Esophagus muscularis mucosa (tissue), 4 donors: ENCODE measurements at regions of chr2 and their contacts with region 1.

Region 1: GRCh38 chr2:11124503-11125068 is 30.7 kb upstream of the SLC66A3 start:
- DNase-seq: no peak
- H3K4me3 ChIP-seq: no peak overlapping the region
- H3K27ac ChIP-seq: no peak overlapping the region
- H3K4me1 ChIP-seq: peaks cover 0 to 6% (median 3%) of the 10 kb centered on the region in 4 donors
- H3K27me3 ChIP-seq: peaks cover 0 to 18% (median 0%) of the 10 kb centered on the region in 4 donors
- CTCF ChIP-seq: peak; percentile 59 to 83 (median 72)
- EP300 ChIP-seq: no peak
- POLR2A ChIP-seq: no peak

Region 2: DNA sequence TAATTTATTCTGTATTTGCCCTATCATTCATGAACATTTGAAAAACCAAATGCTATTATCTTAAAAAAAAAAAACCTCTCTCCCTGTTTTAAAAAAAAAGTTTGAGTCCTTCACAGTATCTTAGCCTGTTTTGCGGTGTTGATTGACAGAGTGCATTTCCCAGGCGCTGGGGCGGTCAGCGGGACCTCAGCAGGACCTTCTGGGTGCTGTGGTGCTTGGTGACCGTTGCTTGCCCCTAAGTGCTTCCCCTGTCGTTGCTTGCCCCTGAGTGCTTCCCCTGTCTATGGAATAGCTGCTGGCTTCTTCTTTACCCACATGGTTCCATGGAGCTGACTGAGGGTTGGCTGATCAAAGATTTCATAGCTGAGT is 391.0 kb before region 1 on chr2:
- intact Hi-C with region 1: no loop called
- DNase-seq: no peak
- H3K4me3 ChIP-seq: no peak overlapping the region
- H3K27ac ChIP-seq: no peak overlapping the region
- H3K4me1 ChIP-seq: no peaks in the 10 kb centered on the region
- H3K27me3 ChIP-seq: peaks cover 0 to 5% (median 0%) of the 10 kb centered on the region in 4 donors
- CTCF ChIP-seq: no peak
- EP300 ChIP-seq: no peak
- POLR2A ChIP-seq: no peak

Region 3: DNA sequence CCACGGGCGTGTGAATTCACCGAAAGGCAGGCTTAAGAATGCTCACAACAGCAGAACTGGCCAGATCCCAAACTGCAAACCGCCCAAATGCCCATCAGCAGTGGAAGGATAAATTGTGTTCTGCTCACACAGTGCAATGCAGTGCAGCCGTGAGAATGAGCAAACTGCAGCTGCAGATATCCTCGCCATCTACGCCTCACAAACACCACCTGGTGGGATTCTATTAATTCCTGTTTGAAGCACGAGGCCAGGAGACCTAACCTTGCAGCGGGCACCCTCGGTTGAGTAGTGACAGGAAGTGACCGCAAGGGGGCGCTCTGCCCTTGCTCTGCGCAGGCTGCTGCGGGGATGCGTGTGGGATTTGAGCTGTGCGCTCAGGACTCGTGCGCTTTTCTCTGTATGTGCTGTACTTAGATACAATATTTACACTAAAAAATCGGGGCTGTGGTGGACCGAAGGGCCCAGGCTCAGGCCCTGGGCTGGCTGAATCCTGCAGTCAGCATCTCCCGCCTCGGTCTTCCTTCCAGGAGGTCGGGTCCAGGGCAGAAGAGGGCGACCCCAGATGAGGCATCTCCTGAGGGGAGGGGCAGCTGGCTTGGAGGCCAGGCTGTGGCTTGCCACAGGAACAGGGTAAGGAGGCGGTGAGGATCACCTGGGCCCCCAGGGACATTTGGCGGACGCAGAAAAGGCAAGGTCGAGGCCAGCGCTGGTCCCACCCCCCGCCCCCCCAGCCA is 292.2 kb before region 1 on chr2:
- intact Hi-C with region 1: loop called (anchors 2 kb)
- DNase-seq: no peak
- H3K4me3 ChIP-seq: no peak overlapping the region
- H3K27ac ChIP-seq: no peak overlapping the region
- H3K4me1 ChIP-seq: peaks cover 7 to 17% (median 15%) of the 10 kb centered on the region in 4 donors
- H3K27me3 ChIP-seq: peaks cover 0 to 68% (median 0%) of the 10 kb centered on the region in 4 donors
- CTCF ChIP-seq: peak; percentile 93 to 99 (median 93)
- EP300 ChIP-seq: no peak
- POLR2A ChIP-seq: no peak

Region 4: DNA sequence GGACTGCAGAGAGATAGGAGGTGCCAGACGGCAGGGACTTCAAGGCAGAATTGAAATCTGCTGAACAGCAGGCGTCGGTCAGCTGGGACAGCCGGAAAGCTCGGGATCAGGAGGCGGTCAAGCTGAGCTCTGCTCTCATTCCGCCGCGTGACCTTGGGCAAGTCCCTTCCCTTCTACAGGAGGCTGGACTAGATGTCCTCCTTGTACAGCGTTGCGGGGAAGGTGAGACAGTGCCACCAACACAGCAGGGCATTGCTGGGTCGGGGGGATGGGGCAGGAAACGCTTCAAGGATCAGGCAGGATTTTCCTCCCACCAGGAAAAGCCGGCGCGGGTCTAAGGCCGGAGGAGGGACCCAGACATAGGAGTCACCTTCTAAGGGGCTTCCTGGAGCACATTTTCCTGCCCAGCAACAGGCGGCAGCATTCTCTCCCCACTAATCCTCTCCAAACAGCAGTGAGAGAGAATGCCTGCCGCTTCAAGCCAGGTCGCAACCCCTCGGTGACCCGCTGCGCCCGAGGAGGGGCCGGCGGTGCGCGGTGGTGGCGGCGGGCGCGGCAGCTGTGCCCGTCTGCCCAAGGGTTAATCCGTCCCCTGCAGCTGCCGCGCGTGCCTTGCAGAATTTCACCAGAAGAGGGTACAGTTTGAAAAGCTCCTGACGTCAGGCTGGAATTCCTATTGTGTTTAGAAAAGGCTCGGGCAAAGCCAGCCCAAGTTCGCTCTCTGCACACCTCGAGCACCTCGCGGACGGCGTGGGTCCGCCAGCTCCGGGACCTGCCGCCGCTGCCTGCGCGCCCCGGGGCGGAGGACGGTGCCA is 213.1 kb before region 1 on chr2 and contains the start of gene KCNF1:
- intact Hi-C with region 1: loop called (anchors 10 kb)
- DNase-seq: no peak
- H3K4me3 ChIP-seq: peak within 1 kb of the TSS; percentile 46 to 67 (median 55)
- H3K27ac ChIP-seq: peak within 1 kb of the TSS; percentile 56 to 66 (median 66)
- H3K4me1 ChIP-seq: peaks cover 0 to 37% (median 34%) of the 10 kb centered on the region in 4 donors
- H3K27me3 ChIP-seq: peaks cover 0 to 54% (median 7%) of the 10 kb centered on the region in 4 donors
- CTCF ChIP-seq: peak in 2 of 3 experiments; percentile 8 to 34
- EP300 ChIP-seq: no peak
- POLR2A ChIP-seq: no peak
- total RNA-seq, gene KCNF1: 20.2 to 51.7 (median 44.4) TPM

Region 5: GRCh38 chr2:11090187-11090586 is 34.4 kb before region 1 on chr2:
- intact Hi-C with region 1: no loop called
- DNase-seq: peak; percentile 14
- H3K4me3 ChIP-seq: no peak overlapping the region
- H3K27ac ChIP-seq: no peak overlapping the region
- H3K4me1 ChIP-seq: no peaks in the 10 kb centered on the region
- H3K27me3 ChIP-seq: peaks cover 0 to 8% (median 0%) of the 10 kb centered on the region in 4 donors
- CTCF ChIP-seq: no peak
- EP300 ChIP-seq: no peak
- POLR2A ChIP-seq: no peak

Region 6: GRCh38 chr2:11250400-11251196 is 126.0 kb after region 1 on chr2:
- intact Hi-C with region 1: no loop called
- DNase-seq: no peak
- H3K4me3 ChIP-seq: no peak overlapping the region
- H3K27ac ChIP-seq: no peak overlapping the region
- H3K4me1 ChIP-seq: peaks cover 9 to 25% (median 21%) of the 10 kb centered on the region in 4 donors
- H3K27me3 ChIP-seq: no peaks in the 10 kb centered on the region
- CTCF ChIP-seq: no peak
- EP300 ChIP-seq: no peak
- POLR2A ChIP-seq: no peak